Activated T-helper 2 cell treated with anti-CD3 and anti-CD28 coated beads, Interferon-gamma antibody, Interleukin-2, Interleukin-4, amounts not matched to agents 10 μg/mL and 5 μg/mL and 100 μg/mL, durations not matched to agents 14 hours and 24 hours and 36 hours (primary cell): ENCODE measurements at regions of chr12 and their contacts with region 1.

Region 1: GRCh38 chr12:65656904-65657351 is 167.4 kb upstream of the HMGA2 start:
- DNase-seq: no peak
- H3K4me3 Mint-ChIP-seq: no peak overlapping the region
- H3K27ac Mint-ChIP-seq: peak overlapping the region; percentile 43
- H3K4me1 Mint-ChIP-seq: peaks cover 15% of the 10 kb centered on the region
- H3K27me3 Mint-ChIP-seq: peaks cover 23% of the 10 kb centered on the region

Region 2: DNA sequence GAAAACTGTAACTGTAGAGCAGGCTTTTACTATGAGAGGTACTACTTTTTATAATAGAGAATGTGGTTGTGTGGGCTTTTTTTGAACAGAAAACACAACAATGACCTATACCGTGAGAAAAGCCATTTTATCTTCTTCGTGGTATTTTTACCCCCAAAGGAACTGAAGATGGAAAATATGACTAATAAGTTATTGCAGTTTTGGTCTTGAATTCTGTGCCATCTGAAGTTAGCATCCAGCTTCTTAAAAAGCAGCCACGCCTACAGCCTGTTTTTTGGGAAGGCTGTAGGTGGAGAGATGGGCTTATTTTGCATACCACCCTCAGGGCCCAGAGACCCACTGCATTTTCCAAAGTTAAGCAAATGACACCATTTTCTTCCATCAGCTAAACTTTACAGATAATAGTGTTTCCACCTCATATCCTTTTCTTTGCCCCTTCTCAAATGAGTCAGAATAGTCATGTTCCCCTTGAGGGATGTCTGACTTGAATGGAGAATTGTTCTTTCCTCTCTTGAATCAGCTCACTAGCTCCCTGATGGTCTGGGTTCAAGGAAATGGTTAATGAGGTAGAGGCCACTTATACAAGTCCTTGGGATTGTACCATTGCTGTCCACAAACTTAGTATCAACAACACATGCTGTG is 779.4 kb before region 1 on chr12:
- intact Hi-C with region 1: loop called (anchors 5 kb)
- DNase-seq: no peak
- H3K4me3 Mint-ChIP-seq: no peak overlapping the region
- H3K27ac Mint-ChIP-seq: peak overlapping the region; percentile 51
- H3K4me1 Mint-ChIP-seq: peaks cover 21% of the 10 kb centered on the region
- H3K27me3 Mint-ChIP-seq: no peaks in the 10 kb centered on the region

Region 3: DNA sequence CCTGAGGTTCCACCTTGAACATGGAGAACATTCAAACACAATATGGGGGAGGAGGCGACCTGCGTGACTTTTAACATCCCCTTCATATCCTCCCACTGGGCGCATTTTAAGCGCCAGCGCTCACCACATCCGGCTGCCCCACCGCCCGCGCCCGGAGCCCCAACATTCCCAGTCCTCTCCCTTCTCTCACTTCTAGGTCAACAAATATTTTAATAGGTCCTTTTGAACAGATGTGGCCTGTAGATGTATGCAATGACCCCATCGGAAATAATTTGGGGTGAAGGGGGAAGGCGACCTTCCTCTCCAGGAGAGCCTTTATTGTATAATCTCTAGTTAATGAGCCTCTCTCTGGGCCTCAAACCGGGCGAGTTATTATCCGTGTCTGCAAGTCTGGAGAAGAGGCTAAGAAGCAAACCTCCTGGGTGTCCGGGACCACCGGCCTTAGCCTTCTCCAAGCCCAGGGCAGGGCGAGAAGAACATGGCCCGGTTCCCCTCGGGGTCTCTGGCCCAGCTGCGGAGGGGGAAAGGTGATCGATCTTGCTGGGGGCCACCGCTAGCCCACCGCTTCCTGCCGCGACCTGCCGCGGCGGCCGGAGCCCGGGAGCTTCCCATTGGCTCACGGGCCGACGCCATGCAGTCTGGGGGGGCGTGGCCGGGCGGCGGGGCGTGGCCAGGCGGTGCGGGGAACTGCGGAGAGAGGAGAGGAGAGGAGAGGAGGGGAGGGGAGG is 84.1 kb after region 1 on chr12:
- intact Hi-C with region 1: loop called (anchors 5 kb)
- DNase-seq: peak; percentile 70
- H3K4me3 Mint-ChIP-seq: peak overlapping the region; percentile 72
- H3K27ac Mint-ChIP-seq: peak overlapping the region; percentile 1
- H3K4me1 Mint-ChIP-seq: peaks cover 13% of the 10 kb centered on the region
- H3K27me3 Mint-ChIP-seq: peaks cover 36% of the 10 kb centered on the region

Region 4: DNA sequence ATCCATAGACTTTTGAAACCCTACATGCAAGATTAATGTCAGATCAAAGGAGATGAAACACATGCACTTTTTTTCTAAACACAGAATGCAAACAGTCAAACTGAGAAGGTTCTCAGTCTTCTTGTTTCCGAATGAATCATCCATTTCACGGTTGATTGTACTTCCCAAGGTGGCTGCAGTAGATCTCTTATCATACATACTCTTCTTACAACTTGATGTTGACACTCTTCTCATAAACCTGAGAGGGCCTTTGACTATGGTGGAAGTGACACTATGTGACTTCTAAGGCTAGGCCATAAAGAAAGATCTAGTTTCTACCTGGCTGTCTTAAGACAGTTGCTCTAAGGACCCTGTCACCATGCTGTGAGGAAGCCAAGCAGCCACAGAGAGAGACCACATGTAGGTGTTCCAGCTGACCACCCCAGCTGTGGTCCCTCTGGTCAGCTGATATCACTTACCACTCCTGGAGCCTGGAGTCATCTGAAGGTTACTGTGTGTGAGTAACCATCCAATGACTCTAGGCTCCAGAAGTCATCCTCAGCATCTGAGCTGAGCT is 100.1 kb after region 1 on chr12:
- intact Hi-C with region 1: loop called (anchors 1 kb)
- DNase-seq: no peak
- H3K4me3 Mint-ChIP-seq: no peak overlapping the region
- H3K27ac Mint-ChIP-seq: peak overlapping the region; percentile 73
- H3K4me1 Mint-ChIP-seq: peaks cover 22% of the 10 kb centered on the region
- H3K27me3 Mint-ChIP-seq: peaks cover 49% of the 10 kb centered on the region